GM12878 (cell line): ENCODE measurements at regions of chr1 and their contacts with region 1.

Region 1: GRCh38 chr1:157580179-157580827 is 17.6 kb downstream of the FCRL4 start:
- DNase-seq: peak; percentile 53
- ATAC-seq: peak; percentile 77
- H3K4me3 ChIP-seq: no peak overlapping the region
- H3K27ac ChIP-seq: no peak overlapping the region
- H3K4me1 ChIP-seq: peaks cover 17% of the 10 kb centered on the region
- H3K27me3 ChIP-seq: peaks cover 0 to 10% of the 10 kb centered on the region in 2 experiments; a peak in 1 of 4 replicates
- CTCF ChIP-seq: peak; percentile 71 to 81 (median 78)
- EP300 ChIP-seq: no peak
- POLR2A ChIP-seq: no peak
- RAD21 ChIP-seq: peak; percentile 88

Region 2: DNA sequence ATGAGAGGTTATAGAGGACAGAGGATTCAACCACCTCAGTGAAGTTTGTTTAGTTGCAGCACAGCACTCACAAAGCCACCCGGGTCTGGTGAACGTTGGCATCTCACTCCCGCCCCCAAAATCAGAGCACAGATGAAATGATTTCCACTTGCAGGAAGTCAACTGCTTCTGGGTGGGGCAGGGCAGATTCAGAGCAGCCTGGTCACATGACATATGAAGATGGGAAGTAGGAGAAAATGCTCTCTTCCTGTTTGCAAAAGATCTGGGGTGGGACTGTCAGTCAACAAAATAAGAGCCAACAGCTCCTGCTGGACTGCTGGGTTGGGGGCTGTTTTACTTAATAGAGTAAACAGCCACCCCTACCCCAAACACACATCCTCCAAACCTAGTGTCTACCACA is 616.7 kb before region 1 on chr1:
- CTCF ChIA-PET with region 1: no interaction called
- POLR2A ChIA-PET with region 1: no interaction called
- RAD21 ChIA-PET with region 1: no interaction called
- SMC1A ChIA-PET with region 1: no interaction called
- in situ Hi-C with region 1: no loop called
- intact Hi-C with region 1: no loop called
- DNase-seq: no peak
- ATAC-seq: peak; percentile 31; the same call in 2 of the 3 replicates
- H3K4me3 ChIP-seq: no peak overlapping the region
- H3K27ac ChIP-seq: no peak overlapping the region
- H3K4me1 ChIP-seq: peaks cover 3% of the 10 kb centered on the region
- H3K27me3 ChIP-seq: no peaks in the 10 kb centered on the region
- CTCF ChIP-seq: no peak
- EP300 ChIP-seq: no peak
- POLR2A ChIP-seq: no peak
- RAD21 ChIP-seq: no peak

Region 3: DNA sequence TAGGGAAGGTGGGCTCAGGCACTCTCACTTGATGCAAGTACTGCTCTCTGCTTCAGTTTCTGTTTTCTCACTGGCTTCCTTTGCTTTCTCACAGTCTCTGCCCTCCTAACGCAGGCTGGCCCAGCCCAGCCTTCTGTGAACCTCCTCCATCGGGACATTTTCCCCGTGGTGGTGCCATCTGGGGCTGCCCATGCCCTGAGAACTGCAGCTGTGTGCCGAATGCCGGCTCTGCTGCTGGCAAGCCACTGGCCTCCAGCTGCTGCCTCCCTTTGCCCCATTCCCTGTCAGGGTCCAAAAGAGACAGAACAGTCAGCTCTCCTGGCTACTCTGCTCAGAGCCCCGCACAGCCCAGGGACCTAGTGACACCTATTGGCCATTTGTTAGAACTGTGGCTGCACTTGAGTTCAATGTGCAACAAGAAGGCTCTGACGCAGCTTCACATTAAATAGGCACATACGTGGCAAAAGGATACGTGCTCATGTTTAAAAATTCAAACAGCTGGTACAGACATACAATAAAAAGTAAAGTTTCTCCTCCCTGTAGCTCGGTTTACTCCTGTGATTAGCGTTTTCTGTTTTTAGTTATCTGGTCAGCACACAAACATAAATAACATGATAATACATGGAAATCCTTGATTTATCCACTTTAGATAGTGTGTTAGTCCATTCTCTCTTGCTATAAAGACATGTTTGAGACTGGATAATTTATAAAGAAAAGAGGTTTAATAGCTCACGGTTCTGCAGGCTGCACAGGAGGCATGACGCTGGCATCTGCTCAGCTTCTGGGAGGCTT is 74.6 kb before region 1 on chr1:
- CTCF ChIA-PET with region 1: interaction called, 66 read pairs
- POLR2A ChIA-PET with region 1: interaction called, 3 read pairs
- RAD21 ChIA-PET with region 1: interaction called, 10 read pairs
- SMC1A ChIA-PET with region 1: interaction called, 35 read pairs
- in situ Hi-C with region 1: no loop called
- intact Hi-C with region 1: no loop called
- DNase-seq: peak; percentile 59
- ATAC-seq: peak; percentile 99
- H3K4me3 ChIP-seq: 0 out of 2 replicates have a peak overlapping the region, but pooled peaks have one; percentile 26
- H3K27ac ChIP-seq: peak overlapping the region; percentile 48
- H3K4me1 ChIP-seq: peaks cover 31% of the 10 kb centered on the region
- H3K27me3 ChIP-seq: no peaks in the 10 kb centered on the region
- CTCF ChIP-seq: peak; percentile 86 to 91 (median 86)
- EP300 ChIP-seq: no peak
- POLR2A ChIP-seq: no peak
- RAD21 ChIP-seq: peak; percentile 90

Region 4: DNA sequence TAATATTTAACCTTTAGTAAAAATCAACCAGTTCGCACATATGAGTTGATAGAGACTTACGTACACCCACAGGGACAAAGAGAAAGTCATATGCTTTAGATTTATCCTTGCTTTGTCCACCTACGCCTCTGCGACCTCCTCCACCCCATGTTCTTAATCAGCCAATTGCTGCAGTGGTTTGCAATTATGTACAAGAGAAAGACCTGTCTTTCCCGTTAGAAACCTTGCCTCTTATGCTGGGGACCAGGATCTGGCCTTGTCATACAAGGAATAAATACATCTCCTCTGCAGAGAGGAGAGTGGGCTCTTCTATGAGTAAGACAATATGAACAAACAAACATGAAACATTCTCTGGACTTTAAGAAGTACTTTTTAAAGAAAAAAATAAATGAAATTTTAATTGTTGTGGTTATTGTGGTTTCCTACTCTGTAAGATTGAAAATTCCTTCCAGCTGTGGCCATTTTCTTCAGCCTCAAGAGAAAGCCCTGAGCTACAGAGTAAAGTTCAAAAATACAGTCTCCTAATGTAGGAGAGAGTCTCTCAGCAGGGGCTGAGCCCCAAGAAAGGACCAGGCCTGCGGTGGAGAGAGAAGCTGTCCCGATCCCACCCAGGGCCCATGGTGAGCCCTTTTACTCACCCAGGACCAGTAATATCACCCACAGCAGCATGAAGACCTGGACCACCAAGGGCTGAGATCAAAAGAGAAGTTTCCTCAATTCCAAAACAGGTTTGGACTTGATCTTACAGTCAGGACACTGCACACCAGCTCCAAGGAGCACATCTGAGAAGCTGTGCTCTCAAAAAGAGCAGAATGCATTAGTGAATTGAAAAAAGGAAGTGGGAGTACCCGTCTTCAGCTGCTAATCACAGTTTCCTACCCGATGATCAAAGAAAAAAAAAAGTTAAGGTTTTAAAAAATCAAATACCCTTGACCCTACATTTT is 28.3 kb before region 1 on chr1 and contains the start of gene FCRL5:
- CTCF ChIA-PET with region 1: interaction called, 17 read pairs
- POLR2A ChIA-PET with region 1: interaction called, 5 read pairs
- RAD21 ChIA-PET with region 1: interaction called, 15 read pairs
- SMC1A ChIA-PET with region 1: interaction called, 10 read pairs
- in situ Hi-C with region 1: no loop called
- intact Hi-C with region 1: no loop called
- DNase-seq: peak; percentile 33
- ATAC-seq: peak; percentile 90
- H3K4me3 ChIP-seq: peak within 1 kb of the TSS; percentile 62
- H3K27ac ChIP-seq: peak within 1 kb of the TSS; percentile 34
- H3K4me1 ChIP-seq: peaks cover 15% of the 10 kb centered on the region
- H3K27me3 ChIP-seq: no peaks in the 10 kb centered on the region; a peak in 1 of 4 replicates
- CTCF ChIP-seq: no peak
- EP300 ChIP-seq: peak in 1 of 2 experiments; percentile 75; a peak in 2 of 4 replicates
- POLR2A ChIP-seq: no peak
- RAD21 ChIP-seq: no peak
- polyA plus RNA-seq, gene FCRL5: 2.6 to 5.7 TPM

Region 5: DNA sequence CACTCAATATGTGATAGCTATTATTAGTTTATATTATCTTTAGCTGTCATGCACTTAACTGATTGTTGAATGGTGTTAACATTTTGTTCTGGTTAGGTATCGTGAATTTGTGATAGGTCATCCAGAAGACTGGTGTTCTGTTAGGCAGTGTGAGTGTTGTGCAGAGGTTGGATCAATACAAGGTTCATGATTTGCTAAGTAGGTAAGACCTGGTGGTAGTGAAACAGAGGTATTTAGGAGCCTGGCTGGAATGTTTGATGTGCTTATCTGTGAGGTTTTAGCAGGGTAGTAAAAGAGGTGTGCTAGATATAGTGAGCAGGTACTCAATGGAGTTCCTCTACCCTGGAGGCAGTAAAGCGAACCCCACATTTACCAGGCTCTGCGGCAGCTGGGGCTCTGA is 37.9 kb after region 1 on chr1:
- CTCF ChIA-PET with region 1: interaction called, 223 read pairs
- POLR2A ChIA-PET with region 1: interaction called, 3 read pairs
- RAD21 ChIA-PET with region 1: interaction called, 34 read pairs
- SMC1A ChIA-PET with region 1: interaction called, 38 read pairs
- in situ Hi-C with region 1: no loop called
- intact Hi-C with region 1: no loop called
- DNase-seq: no peak
- ATAC-seq: no peak
- H3K4me3 ChIP-seq: no peak overlapping the region
- H3K27ac ChIP-seq: no peak overlapping the region
- H3K4me1 ChIP-seq: no peaks in the 10 kb centered on the region
- H3K27me3 ChIP-seq: peaks cover 0 to 12% of the 10 kb centered on the region in 2 experiments; a peak in 2 of 4 replicates
- CTCF ChIP-seq: no peak
- EP300 ChIP-seq: no peak
- POLR2A ChIP-seq: no peak
- RAD21 ChIP-seq: no peak

Region 6: DNA sequence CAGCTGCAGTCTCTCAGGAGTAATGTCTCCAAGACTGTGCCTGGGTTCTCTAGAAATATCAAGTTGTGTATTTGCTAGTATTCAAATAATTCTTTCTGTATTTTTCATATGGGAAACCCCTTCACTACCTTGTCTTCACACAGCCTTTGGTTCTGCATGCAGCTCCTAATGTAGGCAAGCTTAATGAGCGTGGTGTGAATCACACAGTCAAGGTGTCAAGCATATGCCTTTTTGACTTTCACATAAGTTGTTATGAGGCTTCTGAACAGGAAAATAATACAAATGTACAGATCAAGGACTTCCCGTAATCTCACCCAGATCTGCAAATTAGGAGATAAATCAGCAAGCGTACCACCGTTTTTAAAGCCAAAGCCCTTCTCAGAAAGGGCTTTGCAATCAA is 120.4 kb after region 1 on chr1 and contains the start of gene FCRL3:
- CTCF ChIA-PET with region 1: interaction called, 17 read pairs
- POLR2A ChIA-PET with region 1: no interaction called
- RAD21 ChIA-PET with region 1: no interaction called
- SMC1A ChIA-PET with region 1: interaction called, 6 read pairs
- in situ Hi-C with region 1: no loop called
- intact Hi-C with region 1: no loop called
- DNase-seq: no peak
- ATAC-seq: no peak
- H3K4me3 ChIP-seq: no peak within 1 kb of the TSS
- H3K27ac ChIP-seq: no peak within 1 kb of the TSS
- H3K4me1 ChIP-seq: peaks cover 3% of the 10 kb centered on the region; the same call in 1 of the 2 replicates
- H3K27me3 ChIP-seq: peaks cover 3 to 10% of the 10 kb centered on the region in 2 experiments
- CTCF ChIP-seq: no peak
- EP300 ChIP-seq: no peak
- POLR2A ChIP-seq: no peak
- RAD21 ChIP-seq: no peak
- polyA plus RNA-seq, gene FCRL3: not detected

Region 7: DNA sequence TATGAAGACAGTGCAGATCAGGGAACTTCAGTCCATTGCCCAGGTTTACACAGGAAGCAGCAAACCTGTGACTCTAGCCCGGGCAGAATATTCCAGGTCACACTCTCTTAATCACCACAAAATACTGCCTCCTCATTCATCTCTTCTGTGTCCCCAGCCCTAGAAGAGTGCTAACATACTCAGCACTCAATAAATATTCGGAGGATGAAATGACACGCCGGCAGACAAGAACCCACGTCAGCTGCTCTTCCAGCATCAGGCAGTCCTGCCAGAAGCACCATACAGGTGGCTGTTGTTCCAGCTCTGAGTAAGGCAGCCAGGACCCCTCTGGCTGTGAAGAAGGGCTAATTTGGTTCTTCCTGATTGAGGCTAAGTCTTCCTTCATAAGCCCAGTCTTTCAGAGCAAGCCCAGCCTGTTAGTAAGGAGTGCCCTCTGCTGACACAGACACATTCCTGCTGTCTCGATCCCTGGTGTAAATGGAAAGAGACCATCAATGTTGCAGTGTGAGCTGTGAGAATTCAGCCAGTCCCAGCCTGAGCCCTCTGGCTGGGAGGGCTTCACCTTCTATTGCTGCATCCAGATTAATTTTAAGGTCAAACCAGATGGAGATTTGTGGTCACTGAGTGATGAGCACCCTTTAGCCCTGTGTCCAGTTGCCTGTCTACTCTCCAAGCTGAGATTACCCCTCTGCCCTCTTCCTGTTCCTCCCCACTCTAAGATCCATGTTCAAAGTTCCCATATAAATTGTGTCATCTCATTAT is 368.2 kb after region 1 on chr1:
- CTCF ChIA-PET with region 1: interaction called, 6 read pairs
- POLR2A ChIA-PET with region 1: no interaction called
- RAD21 ChIA-PET with region 1: interaction called, 7 read pairs
- SMC1A ChIA-PET with region 1: interaction called, 9 read pairs
- in situ Hi-C with region 1: loop called (anchors 5 kb)
- intact Hi-C with region 1: loop called (anchors 5 kb)
- DNase-seq: no peak
- ATAC-seq: peak; percentile 59
- H3K4me3 ChIP-seq: no peak overlapping the region
- H3K27ac ChIP-seq: no peak overlapping the region
- H3K4me1 ChIP-seq: peaks cover 3% of the 10 kb centered on the region; the same call in 1 of the 2 replicates
- H3K27me3 ChIP-seq: peaks cover 0 to 7% of the 10 kb centered on the region in 2 experiments; a peak in 2 of 4 replicates
- CTCF ChIP-seq: peak; percentile 53 to 64 (median 56); a peak in 5 of 6 replicates
- EP300 ChIP-seq: no peak
- POLR2A ChIP-seq: no peak
- RAD21 ChIP-seq: peak; percentile 86